Right ventricle myocardium inferior (tissue), 1 donor: ENCODE measurements at regions of chr5 and their contacts with region 1.

Region 1: GRCh38 chr5:94524841-94525697 is 93.3 kb downstream of the KIAA0825 start:
- DNase-seq: no peak
- ATAC-seq: no peak

Region 2: GRCh38 chr5:94693043-94693822 is 168.2 kb after region 1 on chr5:
- intact Hi-C with region 1: loop called (anchors 5 kb)
- DNase-seq: no peak
- ATAC-seq: peak; percentile 46

Region 3: GRCh38 chr5:94736498-94736897 is 211.4 kb after region 1 on chr5:
- intact Hi-C with region 1: loop called (anchors 5 kb)
- DNase-seq: no peak
- ATAC-seq: no peak